Activated CD4-positive, alpha-beta memory T cell treated with anti-CD3 and anti-CD28 coated beads, Interleukin-2, amount 10 ng/mL, durations not matched to agents 7 days and 5 days (primary cell): ENCODE measurements at regions of chr6 and their contacts with region 1.

Region 1: GRCh38 chr6:2853761-2854395 is 12.2 kb upstream of the SERPINB1 start:
- DNase-seq: peak; percentile 85
- H3K4me3 Mint-ChIP-seq: peak overlapping the region; percentile 70
- H3K27ac Mint-ChIP-seq: peak overlapping the region; percentile 100
- H3K4me1 Mint-ChIP-seq: peaks cover 70% of the 10 kb centered on the region
- H3K27me3 Mint-ChIP-seq: no peaks in the 10 kb centered on the region

Region 2: GRCh38 chr6:2870056-2870674 is 16.3 kb after region 1 on chr6:
- CTCF ChIA-PET with region 1: interaction called, 20 read pairs
- POLR2A ChIA-PET with region 1: interaction called, 70 read pairs
- DNase-seq: no peak
- H3K4me3 Mint-ChIP-seq: no peak overlapping the region
- H3K27ac Mint-ChIP-seq: no peak overlapping the region
- H3K4me1 Mint-ChIP-seq: peaks cover 41% of the 10 kb centered on the region
- H3K27me3 Mint-ChIP-seq: no peaks in the 10 kb centered on the region

Region 3: DNA sequence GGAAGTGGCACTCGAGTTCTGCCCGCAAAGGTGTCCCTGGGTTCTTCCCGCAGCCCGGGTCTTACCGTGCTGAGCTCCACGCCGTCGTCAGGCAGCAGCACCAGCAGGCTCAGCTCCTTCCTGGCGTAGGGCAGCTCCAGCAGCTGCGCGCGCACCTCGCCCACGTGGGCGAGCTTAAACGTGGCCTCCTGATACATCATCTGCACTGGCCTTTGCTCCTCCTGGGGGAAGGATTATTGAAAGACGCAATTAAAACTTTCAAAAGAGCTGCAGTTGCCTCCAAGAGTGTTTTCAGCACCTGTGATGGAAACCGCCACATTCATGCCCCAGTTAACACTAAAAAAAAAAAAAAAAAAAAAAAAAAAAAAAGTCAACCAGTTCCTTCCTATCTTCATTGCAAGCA is 37.9 kb after region 1 on chr6:
- CTCF ChIA-PET with region 1: interaction called, 4 read pairs
- POLR2A ChIA-PET with region 1: interaction called, 16 read pairs
- DNase-seq: peak; percentile 83
- H3K4me3 Mint-ChIP-seq: peak overlapping the region; percentile 70
- H3K27ac Mint-ChIP-seq: peak overlapping the region; percentile 75
- H3K4me1 Mint-ChIP-seq: peaks cover 54% of the 10 kb centered on the region
- H3K27me3 Mint-ChIP-seq: no peaks in the 10 kb centered on the region

Region 4: DNA sequence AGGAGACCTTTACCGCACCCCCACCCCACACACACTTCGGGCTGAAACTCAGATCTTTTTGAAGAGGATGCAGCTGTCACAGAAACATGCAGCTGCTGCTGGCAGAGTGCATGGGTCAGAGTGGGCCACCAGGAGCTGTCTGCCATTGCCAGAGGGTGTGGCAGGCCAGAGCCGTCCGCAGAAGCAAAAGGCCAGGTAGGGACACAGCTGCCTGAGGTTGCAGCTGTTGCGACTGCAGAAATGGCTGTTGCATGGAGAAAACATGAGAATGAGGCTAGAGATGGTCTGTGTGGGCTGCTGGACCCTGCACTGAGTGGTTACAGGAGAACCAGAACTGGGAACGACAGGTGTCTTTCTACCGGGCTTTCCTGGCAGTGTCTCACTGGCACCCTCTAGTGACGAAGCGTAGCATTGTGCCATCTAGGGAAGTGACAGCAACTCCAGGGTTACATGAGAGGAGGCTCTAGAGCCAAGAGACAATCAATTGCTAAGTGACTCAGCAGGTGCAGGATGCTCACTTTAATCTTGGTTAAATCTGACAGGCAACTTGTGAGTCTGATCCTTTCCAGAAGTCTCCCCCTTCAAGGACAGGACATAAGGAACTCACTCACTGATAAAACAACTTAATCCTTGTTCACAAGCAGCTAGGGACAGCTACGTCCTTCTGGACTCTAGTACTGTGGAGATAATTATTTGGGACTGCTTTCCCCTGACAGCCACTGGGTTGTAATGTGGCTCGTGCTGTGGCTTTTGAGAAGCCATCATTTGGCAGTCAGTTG is 78.3 kb after region 1 on chr6:
- CTCF ChIA-PET with region 1: interaction called, 170 read pairs
- POLR2A ChIA-PET with region 1: interaction called, 11 read pairs
- DNase-seq: peak; percentile 88
- H3K4me3 Mint-ChIP-seq: no peak overlapping the region
- H3K27ac Mint-ChIP-seq: no peak overlapping the region
- H3K4me1 Mint-ChIP-seq: peaks cover 23% of the 10 kb centered on the region
- H3K27me3 Mint-ChIP-seq: peaks cover 20% of the 10 kb centered on the region

Region 5: GRCh38 chr6:3023663-3024483 is 170.0 kb after region 1 on chr6:
- CTCF ChIA-PET with region 1: no interaction called
- POLR2A ChIA-PET with region 1: interaction called, 14 read pairs
- DNase-seq: peak; percentile 94
- H3K4me3 Mint-ChIP-seq: peak overlapping the region; percentile 90
- H3K27ac Mint-ChIP-seq: peak overlapping the region; percentile 98
- H3K4me1 Mint-ChIP-seq: peaks cover 78% of the 10 kb centered on the region
- H3K27me3 Mint-ChIP-seq: no peaks in the 10 kb centered on the region